Head of caudate nucleus (tissue), 42 donors: ENCODE measurements at regions of chr12 and their contacts with region 1.

Region 1: GRCh38 chr12:56189176-56189917 is at the start of gene SMARCC2:
- DNase-seq: peak; percentile 53 to 93 (median 84)

Region 2: GRCh38 chr12:55847603-55848291 is 341.6 kb before region 1 on chr12:
- intact Hi-C with region 1: no loop called
- DNase-seq: peak in 28 of 42 donors; percentile 7 to 68 (median 28)

Region 3: DNA sequence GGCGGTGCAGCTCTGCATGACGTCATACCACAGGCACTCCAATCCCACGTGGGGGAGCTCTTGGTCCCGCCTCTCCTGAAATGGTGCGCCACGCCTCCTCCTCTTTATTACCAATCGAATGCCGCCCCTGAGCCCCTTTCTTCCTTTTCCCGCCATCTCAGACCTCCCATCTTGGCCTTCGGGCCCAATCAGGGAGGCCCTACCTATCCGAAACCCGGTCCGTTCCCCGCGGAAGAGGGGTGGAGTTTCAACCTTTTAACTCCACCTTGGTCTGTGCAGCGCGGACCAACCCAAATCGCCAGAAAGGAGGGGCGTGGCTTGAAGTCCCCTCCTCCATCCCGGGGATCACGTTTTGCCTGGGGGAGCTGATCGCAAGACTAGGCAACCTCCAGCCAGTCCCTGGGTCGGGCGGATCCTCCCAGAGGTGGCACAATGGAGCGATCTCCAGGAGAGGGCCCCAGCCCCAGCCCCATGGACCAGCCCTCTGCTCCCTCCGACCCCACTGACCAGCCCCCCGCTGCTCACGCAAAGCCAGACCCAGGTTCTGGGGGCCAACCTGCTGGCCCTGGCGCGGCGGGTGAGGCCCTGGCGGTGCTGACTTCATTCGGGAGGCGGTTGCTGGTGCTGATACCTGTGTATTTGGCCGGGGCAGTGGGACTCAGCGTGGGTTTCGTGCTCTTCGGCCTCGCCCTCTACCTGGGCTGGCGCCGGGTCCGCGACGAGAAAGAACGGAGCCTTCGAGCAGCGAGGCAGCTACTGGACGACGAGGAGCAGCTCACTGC is 61.3 kb before region 1 on chr12 and contains the start of gene ESYT1:
- intact Hi-C with region 1: loop called (anchors 2 kb)
- DNase-seq: peak; percentile 87 to 99 (median 96)

Region 4: GRCh38 chr12:56266693-56267442 is 77.5 kb after region 1 on chr12 and contains the start of gene COQ10A:
- intact Hi-C with region 1: loop called (anchors 10 kb)
- DNase-seq: peak; percentile 81 to 96 (median 90)